ENCODE measurements at regions of chr1 and their contacts with region 1.

Region 1: GRCh38 chr1:114467488-114467887 is 43.5 kb downstream of the TRIM33 start:
- DNase-seq: peak in 2 of 14 experiments; percentile 20 to 54
- ATAC-seq: peak; percentile 57
- H3K4me3 ChIP-seq: no peak overlapping the region
- H3K4me3 Mint-ChIP-seq: peak overlapping the region; percentile 68
- H3K27ac ChIP-seq: no peak overlapping the region
- H3K27ac Mint-ChIP-seq: peak overlapping the region; percentile 43
- H3K4me1 ChIP-seq: peaks cover 25% of the 10 kb centered on the region
- H3K4me1 Mint-ChIP-seq: peaks cover 69% of the 10 kb centered on the region
- H3K27me3 ChIP-seq: no peaks in the 10 kb centered on the region
- H3K27me3 Mint-ChIP-seq: no peaks in the 10 kb centered on the region
- CTCF ChIP-seq: no peak

Region 2: GRCh38 chr1:113333056-113333455 is 1134.4 kb before region 1 on chr1:
- CTCF ChIA-PET with region 1: no interaction called
- POLR2A ChIA-PET with region 1: no interaction called
- intact Hi-C with region 1: no loop called
- DNase-seq: no peak
- ATAC-seq: no peak
- H3K4me3 ChIP-seq: no peak overlapping the region
- H3K4me3 Mint-ChIP-seq: no peak overlapping the region
- H3K27ac ChIP-seq: no peak overlapping the region
- H3K27ac Mint-ChIP-seq: no peak overlapping the region
- H3K4me1 ChIP-seq: no peaks in the 10 kb centered on the region
- H3K4me1 Mint-ChIP-seq: no peaks in the 10 kb centered on the region
- H3K27me3 ChIP-seq: no peaks in the 10 kb centered on the region
- H3K27me3 Mint-ChIP-seq: peaks cover 12% of the 10 kb centered on the region
- CTCF ChIP-seq: no peak

Region 3: DNA sequence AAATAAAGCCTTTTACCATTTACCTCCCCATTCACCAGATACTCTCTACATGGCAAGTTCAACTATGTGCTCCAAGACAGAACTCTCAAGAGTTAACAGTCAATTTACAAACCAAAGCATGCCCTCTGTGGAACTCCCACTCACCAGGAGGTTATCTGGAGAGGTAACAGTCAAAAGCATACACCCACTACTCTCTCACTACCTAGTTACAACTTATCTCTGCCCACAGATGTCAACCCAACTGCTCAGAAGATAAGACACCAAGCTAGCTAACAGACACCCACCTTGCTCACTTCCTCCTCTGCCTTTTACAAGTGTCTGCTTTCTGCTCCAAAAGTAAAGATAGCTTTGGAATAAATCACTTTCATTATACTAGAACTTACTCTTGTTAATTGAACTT is 87.5 kb before region 1 on chr1:
- CTCF ChIA-PET with region 1: no interaction called
- POLR2A ChIA-PET with region 1: no interaction called
- intact Hi-C with region 1: no loop called
- DNase-seq: no peak
- ATAC-seq: no peak
- H3K4me3 ChIP-seq: no peak overlapping the region
- H3K4me3 Mint-ChIP-seq: no peak overlapping the region
- H3K27ac ChIP-seq: no peak overlapping the region
- H3K27ac Mint-ChIP-seq: no peak overlapping the region
- H3K4me1 ChIP-seq: no peaks in the 10 kb centered on the region
- H3K4me1 Mint-ChIP-seq: no peaks in the 10 kb centered on the region
- H3K27me3 ChIP-seq: no peaks in the 10 kb centered on the region
- H3K27me3 Mint-ChIP-seq: no peaks in the 10 kb centered on the region
- CTCF ChIP-seq: no peak

Region 4: DNA sequence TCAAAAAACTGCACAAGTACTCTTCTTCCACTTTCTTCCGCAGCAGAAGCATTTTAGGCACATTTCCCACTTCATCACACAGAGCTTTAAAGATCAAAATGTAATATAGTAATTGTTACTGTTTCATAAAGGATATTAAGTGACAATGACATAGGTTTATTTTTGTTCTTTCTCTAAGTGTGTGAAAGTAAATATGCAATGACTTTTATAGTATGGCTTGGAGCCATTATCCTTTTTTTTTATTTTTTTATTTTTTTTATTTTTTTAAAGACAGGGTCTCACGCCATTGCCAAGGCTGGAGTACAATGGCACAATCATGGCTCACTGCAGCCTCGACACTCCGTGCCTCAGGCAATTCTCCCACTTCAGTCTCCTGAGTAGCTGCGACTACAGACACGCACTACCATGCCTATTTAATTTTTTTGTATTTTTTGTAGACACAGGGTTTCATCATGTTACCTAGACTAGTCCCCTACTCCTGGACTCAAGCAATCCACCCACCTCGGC is 36.5 kb after region 1 on chr1:
- CTCF ChIA-PET with region 1: no interaction called
- POLR2A ChIA-PET with region 1: no interaction called
- intact Hi-C with region 1: loop called (anchors 5 kb)
- DNase-seq: no peak
- ATAC-seq: no peak
- H3K4me3 ChIP-seq: no peak overlapping the region
- H3K4me3 Mint-ChIP-seq: no peak overlapping the region
- H3K27ac ChIP-seq: no peak overlapping the region
- H3K27ac Mint-ChIP-seq: no peak overlapping the region
- H3K4me1 ChIP-seq: peaks cover 31% of the 10 kb centered on the region
- H3K4me1 Mint-ChIP-seq: peaks cover 81% of the 10 kb centered on the region
- H3K27me3 ChIP-seq: no peaks in the 10 kb centered on the region
- H3K27me3 Mint-ChIP-seq: no peaks in the 10 kb centered on the region
- CTCF ChIP-seq: no peak

Region 5: GRCh38 chr1:114610546-114611245 is 143.2 kb after region 1 on chr1:
- CTCF ChIA-PET with region 1: no interaction called
- POLR2A ChIA-PET with region 1: no interaction called
- intact Hi-C with region 1: no loop called
- DNase-seq: no peak
- ATAC-seq: no peak
- H3K4me3 ChIP-seq: no peak overlapping the region
- H3K4me3 Mint-ChIP-seq: no peak overlapping the region
- H3K27ac ChIP-seq: no peak overlapping the region
- H3K27ac Mint-ChIP-seq: no peak overlapping the region
- H3K4me1 ChIP-seq: no peaks in the 10 kb centered on the region
- H3K4me1 Mint-ChIP-seq: no peaks in the 10 kb centered on the region
- H3K27me3 ChIP-seq: peaks cover 2 to 5% of the 10 kb centered on the region in 2 experiments
- H3K27me3 Mint-ChIP-seq: peaks cover 18% of the 10 kb centered on the region
- CTCF ChIP-seq: no peak